Activated CD8-positive, alpha-beta T cell treated with anti-CD3 and anti-CD28 coated beads, Interleukin-2, amount 10 ng/mL, durations not matched to agents 7 days and 5 days (primary cell): ENCODE measurements at regions of chr17 and their contacts with region 1.

Region 1: GRCh38 chr17:42997984-42998938 is at the start of gene RPL27:
- DNase-seq: peak; percentile 99
- ATAC-seq: peak; percentile 99
- H3K4me3 Mint-ChIP-seq: peak within 1 kb of the TSS; percentile 96
- H3K27ac Mint-ChIP-seq: peak within 1 kb of the TSS; percentile 99
- H3K4me1 Mint-ChIP-seq: peaks cover 32% of the 10 kb centered on the region
- H3K27me3 Mint-ChIP-seq: no peaks in the 10 kb centered on the region
- total RNA-seq, gene RPL27: 949 to 980 TPM

Region 2: GRCh38 chr17:42577532-42578281 is 420.6 kb before region 1 on chr17 and contains the start of gene PSMC3IP:
- CTCF ChIA-PET with region 1: interaction called, 11 read pairs
- POLR2A ChIA-PET with region 1: no interaction called
- DNase-seq: peak; percentile 97
- ATAC-seq: peak; percentile 91
- H3K4me3 Mint-ChIP-seq: peak within 1 kb of the TSS; percentile 98
- H3K27ac Mint-ChIP-seq: peak within 1 kb of the TSS; percentile 96
- H3K4me1 Mint-ChIP-seq: peaks cover 49% of the 10 kb centered on the region
- H3K27me3 Mint-ChIP-seq: no peaks in the 10 kb centered on the region
- total RNA-seq, gene PSMC3IP: 19.2 to 21.8 TPM

Region 3: GRCh38 chr17:42832974-42833766 is 165.1 kb before region 1 on chr17 and contains the start of gene PSME3:
- CTCF ChIA-PET with region 1: no interaction called
- POLR2A ChIA-PET with region 1: interaction called, 14 read pairs
- DNase-seq: peak; percentile 92
- ATAC-seq: peak; percentile 94
- H3K4me3 Mint-ChIP-seq: peak within 1 kb of the TSS; percentile 94
- H3K27ac Mint-ChIP-seq: peak within 1 kb of the TSS; percentile 100
- H3K4me1 Mint-ChIP-seq: peaks cover 25% of the 10 kb centered on the region
- H3K27me3 Mint-ChIP-seq: no peaks in the 10 kb centered on the region
- total RNA-seq, gene PSME3: 141 to 145 TPM

Region 4: GRCh38 chr17:42979511-42980397 is 18.5 kb before region 1 on chr17 and contains the start of gene PTGES3L:
- CTCF ChIA-PET with region 1: interaction called, 30 read pairs
- POLR2A ChIA-PET with region 1: interaction called, 18 read pairs
- DNase-seq: peak; percentile 55
- ATAC-seq: peak; percentile 43
- H3K4me3 Mint-ChIP-seq: peak within 1 kb of the TSS; percentile 96
- H3K27ac Mint-ChIP-seq: peak within 1 kb of the TSS; percentile 95
- H3K4me1 Mint-ChIP-seq: peaks cover 40% of the 10 kb centered on the region
- H3K27me3 Mint-ChIP-seq: no peaks in the 10 kb centered on the region
- total RNA-seq, gene PTGES3L: 0.37 to 0.86 TPM

Region 5: DNA sequence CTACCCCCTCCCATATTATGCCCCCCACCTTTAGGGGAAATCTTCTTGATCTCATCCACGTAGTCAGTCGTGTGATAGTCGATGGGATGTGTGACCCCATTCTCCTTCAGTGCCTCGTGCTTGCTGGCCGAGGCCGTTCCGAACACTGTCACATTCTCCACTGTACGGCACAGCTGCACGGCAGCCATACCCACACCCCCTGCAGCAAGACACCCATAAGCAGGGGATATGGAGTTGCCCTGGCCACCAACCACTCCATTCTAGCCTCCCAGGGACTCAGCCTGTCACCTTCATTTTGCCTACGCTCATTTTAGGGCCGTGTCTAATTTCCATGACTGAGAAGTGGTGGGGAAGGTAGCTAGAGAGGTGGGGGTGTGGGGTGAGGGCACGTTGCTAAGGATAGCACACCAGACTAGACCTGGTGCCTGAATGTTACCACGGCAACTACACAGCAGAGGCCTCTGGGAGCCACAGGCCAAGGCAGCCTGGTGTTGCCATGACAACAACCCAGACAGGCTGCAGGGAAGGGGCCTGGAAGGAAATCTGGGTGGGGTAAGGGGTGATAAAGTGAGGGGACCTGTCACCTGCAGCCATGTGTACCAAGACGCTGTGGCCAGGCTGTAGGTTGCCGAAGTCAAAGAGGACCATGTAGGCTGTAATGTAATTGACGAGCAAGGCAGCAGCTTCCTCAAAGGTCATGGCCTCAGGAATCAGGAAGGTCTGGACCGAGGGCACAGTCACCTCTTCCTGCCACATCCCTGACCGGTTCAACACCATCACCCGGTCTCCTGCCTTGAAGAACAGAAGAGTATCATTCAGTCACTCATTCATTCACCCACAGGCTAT is 20.0 kb after region 1 on chr17:
- CTCF ChIA-PET with region 1: no interaction called
- POLR2A ChIA-PET with region 1: interaction called, 14 read pairs
- DNase-seq: peak; percentile 56
- ATAC-seq: peak; percentile 54
- H3K4me3 Mint-ChIP-seq: no peak overlapping the region
- H3K27ac Mint-ChIP-seq: no peak overlapping the region
- H3K4me1 Mint-ChIP-seq: peaks cover 36% of the 10 kb centered on the region
- H3K27me3 Mint-ChIP-seq: peaks cover 3% of the 10 kb centered on the region

Region 6: GRCh38 chr17:43360739-43361505 is 362.7 kb after region 1 on chr17:
- CTCF ChIA-PET with region 1: interaction called, 4 read pairs
- POLR2A ChIA-PET with region 1: interaction called, 16 read pairs
- DNase-seq: peak; percentile 97
- ATAC-seq: peak; percentile 83
- H3K4me3 Mint-ChIP-seq: peak overlapping the region; percentile 91
- H3K27ac Mint-ChIP-seq: peak overlapping the region; percentile 100
- H3K4me1 Mint-ChIP-seq: peaks cover 40% of the 10 kb centered on the region
- H3K27me3 Mint-ChIP-seq: no peaks in the 10 kb centered on the region

Region 7: GRCh38 chr17:43483674-43484372 is 485.6 kb after region 1 on chr17 and contains the start of gene DHX8:
- CTCF ChIA-PET with region 1: interaction called, 12 read pairs
- POLR2A ChIA-PET with region 1: interaction called, 6 read pairs
- DNase-seq: peak; percentile 98
- ATAC-seq: peak; percentile 99
- H3K4me3 Mint-ChIP-seq: peak within 1 kb of the TSS; percentile 100
- H3K27ac Mint-ChIP-seq: peak within 1 kb of the TSS; percentile 99
- H3K4me1 Mint-ChIP-seq: peaks cover 29% of the 10 kb centered on the region
- H3K27me3 Mint-ChIP-seq: peaks cover 3% of the 10 kb centered on the region
- total RNA-seq, gene DHX8: 52.7 to 56.4 TPM